ENCODE measurements at regions of chrX and their contacts with region 1.

Region 1: DNA sequence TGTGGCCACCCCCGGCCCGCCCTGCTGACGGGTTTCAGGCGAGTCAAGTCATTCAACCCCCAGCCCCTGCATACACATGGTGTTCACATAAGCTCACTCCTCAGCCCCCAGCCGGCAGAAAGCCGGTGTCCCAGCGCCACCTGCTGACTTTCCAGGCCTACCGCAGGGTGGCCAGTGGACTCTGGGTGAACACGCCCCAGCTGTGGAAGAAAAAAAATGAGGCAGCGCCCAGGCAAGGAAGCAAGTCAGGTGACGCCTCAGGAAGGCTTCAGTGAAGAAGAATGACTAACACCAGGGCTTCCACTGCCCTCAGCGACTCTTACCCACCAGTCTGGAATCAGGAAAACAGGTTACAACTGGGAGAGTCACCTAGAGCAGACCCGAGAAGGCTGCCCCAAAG is 15.8 kb downstream of the BCAP31 start:
- DNase-seq: peak; percentile 73
- ATAC-seq: peak; percentile 84
- H3K4me3 Mint-ChIP-seq: no peak overlapping the region
- H3K27ac Mint-ChIP-seq: no peak overlapping the region
- H3K4me1 Mint-ChIP-seq: 0 out of 2 replicates have a peak, but pooled peaks cover 3% of the 10 kb centered on the region
- H3K27me3 Mint-ChIP-seq: no peaks in the 10 kb centered on the region
- CTCF ChIP-seq: no peak

Region 2: GRCh38 chrX:153687121-153688039 is 21.0 kb before region 1 on chrX and contains the start of gene SLC6A8:
- CTCF ChIA-PET with region 1: interaction called, 29 read pairs
- POLR2A ChIA-PET with region 1: interaction called, 3 read pairs
- DNase-seq: peak; percentile 65
- ATAC-seq: peak; percentile 38
- H3K4me3 Mint-ChIP-seq: peak within 1 kb of the TSS; percentile 61
- H3K27ac Mint-ChIP-seq: peak within 1 kb of the TSS; percentile 85
- H3K4me1 Mint-ChIP-seq: peaks cover 18% of the 10 kb centered on the region
- H3K27me3 Mint-ChIP-seq: no peaks in the 10 kb centered on the region; the same call in 1 of the 2 replicates
- CTCF ChIP-seq: peak; percentile 31; the same call in 1 of the 2 replicates
- total RNA-seq, gene SLC6A8: 102 to 112 TPM (median 110 TPM) in 3 replicates

Measured in WTC11 (cell line).